Activated CD8-positive, alpha-beta T cell treated with anti-CD3 and anti-CD28 coated beads, Interleukin-2, amount 10 ng/mL, durations not matched to agents 7 days and 5 days (primary cell): ENCODE measurements at regions of chr4 and their contacts with region 1.

Region 1: GRCh38 chr4:184474263-184475095 is at the start of gene IRF2:
- DNase-seq: peak; percentile 99
- ATAC-seq: peak; percentile 75
- H3K4me3 Mint-ChIP-seq: peak within 1 kb of the TSS; percentile 99
- H3K27ac Mint-ChIP-seq: peak within 1 kb of the TSS; percentile 99
- H3K4me1 Mint-ChIP-seq: peaks cover 57% of the 10 kb centered on the region
- H3K27me3 Mint-ChIP-seq: no peaks in the 10 kb centered on the region
- total RNA-seq, gene IRF2: 59.7 to 65.3 TPM

Region 2: GRCh38 chr4:184282251-184282713 is 192.2 kb before region 1 on chr4:
- CTCF ChIA-PET with region 1: interaction called, 9 read pairs
- POLR2A ChIA-PET with region 1: interaction called, 28 read pairs
- DNase-seq: peak; percentile 79
- ATAC-seq: peak; percentile 86
- H3K4me3 Mint-ChIP-seq: no peak overlapping the region
- H3K27ac Mint-ChIP-seq: peak overlapping the region; percentile 84
- H3K4me1 Mint-ChIP-seq: peaks cover 44% of the 10 kb centered on the region
- H3K27me3 Mint-ChIP-seq: no peaks in the 10 kb centered on the region

Region 3: GRCh38 chr4:184417802-184418511 is 56.5 kb before region 1 on chr4:
- CTCF ChIA-PET with region 1: interaction called, 3 read pairs
- POLR2A ChIA-PET with region 1: interaction called, 15 read pairs
- DNase-seq: no peak
- ATAC-seq: peak; percentile 75
- H3K4me3 Mint-ChIP-seq: peak overlapping the region; percentile 59
- H3K27ac Mint-ChIP-seq: peak overlapping the region; percentile 90
- H3K4me1 Mint-ChIP-seq: peaks cover 86% of the 10 kb centered on the region
- H3K27me3 Mint-ChIP-seq: no peaks in the 10 kb centered on the region

Region 4: GRCh38 chr4:184514121-184514988 is 39.9 kb after region 1 on chr4:
- CTCF ChIA-PET with region 1: interaction called, 6 read pairs
- POLR2A ChIA-PET with region 1: interaction called, 37 read pairs
- DNase-seq: peak; percentile 57
- ATAC-seq: peak; percentile 86
- H3K4me3 Mint-ChIP-seq: peak overlapping the region; percentile 7
- H3K27ac Mint-ChIP-seq: peak overlapping the region; percentile 71
- H3K4me1 Mint-ChIP-seq: peaks cover 35% of the 10 kb centered on the region
- H3K27me3 Mint-ChIP-seq: no peaks in the 10 kb centered on the region

Region 5: DNA sequence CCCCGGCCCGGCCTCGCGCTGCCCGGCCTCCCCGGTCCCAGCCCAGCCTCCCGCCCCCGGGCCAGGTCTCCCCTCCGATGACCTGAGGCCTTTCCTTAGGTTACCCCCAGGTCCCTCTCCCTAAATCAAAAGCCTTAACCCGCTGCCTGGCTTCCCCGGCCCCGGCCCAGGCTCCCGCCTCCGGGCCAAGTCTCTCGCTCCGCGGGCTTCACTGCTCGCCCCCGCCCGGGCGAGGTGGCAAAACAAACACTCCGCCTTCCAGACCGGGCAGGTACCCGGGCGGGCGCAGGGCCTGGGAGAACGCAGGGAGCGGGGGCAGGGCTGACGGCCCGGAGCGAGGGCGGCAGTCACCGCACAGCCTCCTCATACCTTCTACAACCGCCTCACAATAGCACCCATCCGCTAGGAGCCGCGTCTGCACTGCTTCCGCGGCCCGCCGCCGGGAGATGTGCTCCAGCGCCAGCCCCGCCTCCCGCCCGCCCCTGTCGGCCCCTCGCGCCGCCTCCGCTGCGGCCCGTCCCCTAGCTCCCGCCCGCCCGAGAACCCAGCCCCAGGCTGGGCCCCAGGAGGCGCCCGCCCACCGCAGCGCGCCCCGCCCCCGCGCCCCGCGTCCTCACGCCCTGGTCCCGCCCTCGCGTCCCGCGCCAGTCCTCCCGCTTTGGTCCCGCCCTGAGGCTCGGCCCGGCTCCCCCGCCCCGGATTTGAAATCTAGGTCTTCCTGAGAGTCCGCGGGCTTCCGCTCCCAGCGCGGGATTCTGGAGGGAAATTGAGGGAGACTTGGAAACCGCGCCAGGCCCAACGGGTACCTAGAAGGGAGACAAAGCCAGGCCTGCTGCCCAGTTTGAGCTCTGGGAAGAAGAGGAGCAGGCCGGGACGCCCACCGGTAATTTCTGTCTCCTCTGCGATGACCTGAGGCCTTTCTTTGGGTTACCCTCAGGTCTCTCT is 174.8 kb after region 1 on chr4 and contains the starts of genes CASP3 and PRIMPOL:
- CTCF ChIA-PET with region 1: no interaction called
- POLR2A ChIA-PET with region 1: interaction called, 11 read pairs
- DNase-seq: peak; percentile 96
- ATAC-seq: peak; percentile 92
- H3K4me3 Mint-ChIP-seq: peak within 1 kb of the TSS; percentile 89
- H3K27ac Mint-ChIP-seq: peak within 1 kb of the TSS; percentile 88
- H3K4me1 Mint-ChIP-seq: peaks cover 51% of the 10 kb centered on the region
- H3K27me3 Mint-ChIP-seq: no peaks in the 10 kb centered on the region
- total RNA-seq, gene CASP3: 71.7 to 78.0 TPM
- total RNA-seq, gene PRIMPOL: 24.9 to 26.9 TPM